ENCODE measurements at regions of chr10 and their contacts with region 1.

Region 1: DNA sequence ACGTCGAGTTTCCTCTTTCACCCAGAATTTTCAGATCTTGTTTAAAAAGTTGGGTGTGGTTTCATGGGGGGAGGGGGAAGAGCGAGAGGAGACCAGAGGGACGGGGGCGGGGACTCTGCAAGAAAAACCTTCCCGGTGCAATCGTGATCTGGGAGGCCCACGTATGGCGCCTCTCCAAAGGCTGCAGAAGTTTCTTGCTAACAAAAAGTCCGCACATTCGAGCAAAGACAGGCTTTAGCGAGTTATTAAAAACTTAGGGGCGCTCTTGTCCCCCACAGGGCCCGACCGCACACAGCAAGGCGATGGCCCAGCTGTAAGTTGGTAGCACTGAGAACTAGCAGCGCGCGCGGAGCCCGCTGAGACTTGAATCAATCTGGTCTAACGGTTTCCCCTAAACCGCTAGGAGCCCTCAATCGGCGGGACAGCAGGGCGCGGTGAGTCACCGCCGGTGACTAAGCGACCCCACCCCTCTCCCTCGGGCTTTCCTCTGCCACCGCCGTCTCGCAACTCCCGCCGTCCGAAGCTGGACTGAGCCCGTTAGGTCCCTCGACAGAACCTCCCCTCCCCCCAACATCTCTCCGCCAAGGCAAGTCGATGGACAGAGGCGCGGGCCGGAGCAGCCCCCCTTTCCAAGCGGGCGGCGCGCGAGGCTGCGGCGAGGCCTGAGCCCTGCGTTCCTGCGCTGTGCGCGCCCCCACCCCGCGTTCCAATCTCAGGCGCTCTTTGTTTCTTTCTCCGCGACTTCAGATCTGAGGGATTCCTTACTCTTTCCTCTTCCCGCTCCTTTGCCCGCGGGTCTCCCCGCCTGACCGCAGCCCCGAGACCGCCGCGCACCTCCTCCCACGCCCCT is at the start of gene VIM:
- DNase-seq: peak; percentile 82
- ATAC-seq: peak; percentile 45
- H3K4me3 Mint-ChIP-seq: peak within 1 kb of the TSS; percentile 97
- H3K27ac Mint-ChIP-seq: peak within 1 kb of the TSS; percentile 99
- H3K4me1 Mint-ChIP-seq: peaks cover 46% of the 10 kb centered on the region
- H3K27me3 Mint-ChIP-seq: no peaks in the 10 kb centered on the region
- CTCF ChIP-seq: no peak
- total RNA-seq, gene VIM: 796 and 798 TPM in 2 replicates

Region 2: GRCh38 chr10:16817125-16818019 is 410.9 kb before region 1 on chr10 and contains the start of gene RSU1:
- CTCF ChIA-PET with region 1: interaction called, 8 read pairs
- POLR2A ChIA-PET with region 1: interaction called, 70 read pairs
- intact Hi-C with region 1: loop called (anchors 1 kb)
- DNase-seq: peak; percentile 100
- ATAC-seq: peak; percentile 98
- H3K4me3 Mint-ChIP-seq: peak within 1 kb of the TSS; percentile 94
- H3K27ac Mint-ChIP-seq: peak within 1 kb of the TSS; percentile 94
- H3K4me1 Mint-ChIP-seq: peaks cover 26% of the 10 kb centered on the region
- H3K27me3 Mint-ChIP-seq: no peaks in the 10 kb centered on the region
- CTCF ChIP-seq: no peak
- total RNA-seq, gene RSU1: 59.2 and 60.7 TPM in 2 replicates

Region 3: GRCh38 chr10:17023386-17024298 is 204.7 kb before region 1 on chr10:
- CTCF ChIA-PET with region 1: no interaction called
- POLR2A ChIA-PET with region 1: interaction called, 3 read pairs
- intact Hi-C with region 1: loop called (anchors 1 kb)
- DNase-seq: no peak
- ATAC-seq: peak; percentile 78
- H3K4me3 Mint-ChIP-seq: peak overlapping the region; percentile 15
- H3K27ac Mint-ChIP-seq: peak overlapping the region; percentile 9
- H3K4me1 Mint-ChIP-seq: peaks cover 32% of the 10 kb centered on the region
- H3K27me3 Mint-ChIP-seq: peaks cover 2% of the 10 kb centered on the region
- CTCF ChIP-seq: no peak

Region 4: GRCh38 chr10:17181758-17182157 is 46.6 kb before region 1 on chr10:
- CTCF ChIA-PET with region 1: no interaction called
- POLR2A ChIA-PET with region 1: interaction called, 5 read pairs
- intact Hi-C with region 1: loop called (anchors 10 kb)
- DNase-seq: no peak
- ATAC-seq: no peak
- H3K4me3 Mint-ChIP-seq: no peak overlapping the region
- H3K27ac Mint-ChIP-seq: no peak overlapping the region
- H3K4me1 Mint-ChIP-seq: peaks cover 6% of the 10 kb centered on the region
- H3K27me3 Mint-ChIP-seq: no peaks in the 10 kb centered on the region
- CTCF ChIP-seq: no peak

Region 5: DNA sequence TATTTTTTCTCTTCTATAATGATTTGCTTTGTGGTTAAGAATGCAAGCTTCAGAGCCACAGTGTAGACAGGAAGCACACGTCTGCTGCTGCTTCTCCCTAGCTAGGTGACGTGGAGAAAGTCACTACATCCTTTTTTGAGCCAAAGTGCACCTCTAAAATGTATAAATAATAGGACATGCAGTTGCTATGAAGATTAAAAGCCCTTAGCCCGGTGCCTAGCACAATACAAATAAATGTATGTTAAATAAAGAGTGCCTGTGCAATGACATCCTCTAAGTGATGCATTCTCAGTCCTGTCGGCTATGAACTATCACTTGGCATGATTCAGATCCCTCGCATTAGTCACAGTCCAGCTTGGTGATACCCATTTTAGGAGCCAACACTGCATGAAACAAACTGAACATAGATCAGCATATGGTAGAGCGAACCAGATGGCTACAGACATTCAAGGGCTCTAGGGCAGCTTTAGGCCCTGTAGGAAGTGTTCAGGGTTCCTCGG is 22.1 kb before region 1 on chr10:
- CTCF ChIA-PET with region 1: interaction called, 35 read pairs
- POLR2A ChIA-PET with region 1: interaction called, 251 read pairs
- intact Hi-C with region 1: loop called (anchors 1 kb)
- DNase-seq: no peak
- ATAC-seq: peak; percentile 62
- H3K4me3 Mint-ChIP-seq: peak overlapping the region; percentile 13
- H3K27ac Mint-ChIP-seq: peak overlapping the region; percentile 88
- H3K4me1 Mint-ChIP-seq: peaks cover 29% of the 10 kb centered on the region
- H3K27me3 Mint-ChIP-seq: no peaks in the 10 kb centered on the region
- CTCF ChIP-seq: no peak

Region 6: GRCh38 chr10:17354781-17355180 is 126.5 kb after region 1 on chr10:
- CTCF ChIA-PET with region 1: no interaction called
- POLR2A ChIA-PET with region 1: no interaction called
- intact Hi-C with region 1: no loop called
- DNase-seq: no peak
- ATAC-seq: no peak
- H3K4me3 Mint-ChIP-seq: no peak overlapping the region
- H3K27ac Mint-ChIP-seq: no peak overlapping the region
- H3K4me1 Mint-ChIP-seq: no peaks in the 10 kb centered on the region
- H3K27me3 Mint-ChIP-seq: peaks cover 11% of the 10 kb centered on the region
- CTCF ChIP-seq: no peak

Region 7: DNA sequence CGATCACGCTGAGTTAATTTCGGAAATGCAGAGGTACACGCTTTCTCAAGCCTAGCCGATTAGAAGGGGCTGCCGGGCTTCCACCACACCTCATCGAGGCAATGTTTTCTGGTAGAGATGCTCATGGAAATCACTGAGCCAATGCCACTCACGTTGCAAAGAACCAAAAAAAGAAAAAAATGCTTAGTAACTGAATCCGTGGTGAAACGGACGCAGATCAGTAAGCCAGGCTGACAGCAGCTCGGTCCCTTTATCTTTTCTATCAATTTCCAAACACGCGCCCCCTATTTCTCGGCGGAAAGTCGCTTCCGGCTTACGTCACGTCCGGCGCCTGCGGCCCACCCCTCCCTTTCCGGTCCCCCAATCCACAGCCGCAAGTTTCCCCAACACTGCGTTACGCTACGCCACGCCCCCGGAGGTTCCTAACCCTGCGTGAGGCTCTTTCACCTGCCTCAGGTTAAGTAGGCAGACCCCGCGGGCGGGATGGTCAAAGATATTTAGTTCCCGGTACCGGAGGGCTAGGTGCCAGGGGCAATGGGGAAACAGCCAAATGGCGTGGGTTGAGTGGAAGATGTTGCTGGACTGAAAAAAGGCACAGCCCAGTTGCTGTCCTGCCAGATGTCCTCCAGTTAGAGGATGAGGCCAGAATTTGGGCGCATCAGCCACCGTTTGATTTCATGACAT is 1423.2 kb after region 1 on chr10 and contains the start of gene NSUN6:
- CTCF ChIA-PET with region 1: no interaction called
- POLR2A ChIA-PET with region 1: no interaction called
- intact Hi-C with region 1: loop called (anchors 2 kb)
- DNase-seq: peak; percentile 87
- ATAC-seq: peak; percentile 98
- H3K4me3 Mint-ChIP-seq: peak within 1 kb of the TSS; percentile 94
- H3K27ac Mint-ChIP-seq: peak within 1 kb of the TSS; percentile 92
- H3K4me1 Mint-ChIP-seq: peaks cover 38% of the 10 kb centered on the region
- H3K27me3 Mint-ChIP-seq: no peaks in the 10 kb centered on the region
- CTCF ChIP-seq: no peak
- total RNA-seq, gene NSUN6: 16.4 and 18.4 TPM in 2 replicates